ENCODE measurements at regions of chr3 and their contacts with region 1.

Region 1: GRCh38 chr3:140552898-140553297 is 125.0 kb upstream of the TRIM42 start:
- DNase-seq: peak; percentile 45
- ATAC-seq: peak; percentile 77

Region 2: DNA sequence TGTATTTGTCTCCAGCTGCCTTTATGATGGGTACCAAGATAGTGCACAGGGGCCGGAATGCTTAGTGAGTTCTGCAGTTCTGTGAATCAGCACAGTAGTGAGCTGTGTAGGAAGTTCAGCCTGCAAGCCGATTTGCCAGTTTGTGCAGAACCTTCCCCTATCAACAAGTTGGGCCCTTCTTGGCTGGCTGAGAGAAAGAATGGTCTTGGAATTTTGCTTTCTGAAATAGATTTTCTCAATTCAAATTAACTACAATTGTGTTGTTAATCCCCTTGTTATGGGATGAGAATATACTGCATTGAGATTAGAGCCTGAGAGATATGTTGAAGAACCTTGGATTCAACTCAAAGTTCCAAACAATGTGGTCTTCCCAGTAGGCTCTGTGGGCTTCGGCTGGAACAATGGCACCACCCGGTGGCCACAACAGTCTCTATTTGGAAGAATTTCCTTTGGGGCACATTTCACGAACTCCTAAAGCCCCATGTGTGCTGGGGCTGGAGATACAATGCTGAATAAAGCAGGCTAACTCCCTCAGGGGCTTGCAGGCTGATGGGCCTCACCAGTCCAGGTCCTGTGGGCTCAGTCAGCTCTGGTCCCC is 184.1 kb after region 1 on chr3:
- intact Hi-C with region 1: loop called (anchors 10 kb)
- DNase-seq: peak; percentile 71
- ATAC-seq: peak; percentile 87

Measured in left ventricle myocardium superior (tissue), 1 donor.